ENCODE measurements at regions of chr5 and their contacts with region 1.

Region 1: GRCh38 chr5:141878711-141879425 is 658 bp upstream of the PCDH1 start:
- DNase-seq: peak; percentile 88
- ATAC-seq: peak; percentile 92

Region 2: DNA sequence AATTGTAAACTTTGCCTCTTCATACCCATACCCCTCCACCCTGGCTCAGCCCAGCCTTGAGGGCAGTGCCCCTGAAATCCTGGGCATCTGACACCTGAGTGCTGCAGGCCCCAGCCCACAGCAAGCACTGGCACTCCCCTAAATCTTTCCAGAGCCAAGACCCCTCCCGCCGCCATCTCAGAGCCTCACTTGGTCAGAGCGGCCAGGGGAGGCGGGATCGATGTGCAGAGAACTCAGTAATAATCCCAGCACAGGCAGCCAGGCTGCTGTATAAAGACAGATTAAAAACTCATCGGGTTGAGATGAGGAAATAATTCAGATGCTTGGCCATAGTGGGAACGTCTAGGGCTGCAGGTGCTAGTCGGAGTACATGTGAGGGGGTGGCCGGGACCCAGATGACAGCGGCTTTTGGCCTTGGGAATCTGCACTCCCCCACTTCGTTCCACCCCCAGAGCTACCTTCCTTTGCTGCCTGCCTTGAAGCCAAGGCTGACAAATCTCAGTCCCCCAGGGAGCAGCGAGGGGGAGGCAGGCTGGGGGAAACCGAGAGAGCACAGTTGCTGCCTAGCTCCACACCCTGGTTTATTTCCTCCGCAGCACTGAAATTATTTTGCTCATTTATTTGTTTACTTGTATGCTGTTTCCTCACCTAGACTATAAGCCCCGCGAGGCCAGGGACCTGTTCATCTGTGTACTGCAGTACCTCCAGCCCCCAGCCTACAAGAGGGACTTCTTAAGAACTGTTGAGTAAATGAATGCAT is 177.3 kb before region 1 on chr5:
- intact Hi-C with region 1: loop called (anchors 2 kb)
- DNase-seq: no peak
- ATAC-seq: peak; percentile 11

Region 3: DNA sequence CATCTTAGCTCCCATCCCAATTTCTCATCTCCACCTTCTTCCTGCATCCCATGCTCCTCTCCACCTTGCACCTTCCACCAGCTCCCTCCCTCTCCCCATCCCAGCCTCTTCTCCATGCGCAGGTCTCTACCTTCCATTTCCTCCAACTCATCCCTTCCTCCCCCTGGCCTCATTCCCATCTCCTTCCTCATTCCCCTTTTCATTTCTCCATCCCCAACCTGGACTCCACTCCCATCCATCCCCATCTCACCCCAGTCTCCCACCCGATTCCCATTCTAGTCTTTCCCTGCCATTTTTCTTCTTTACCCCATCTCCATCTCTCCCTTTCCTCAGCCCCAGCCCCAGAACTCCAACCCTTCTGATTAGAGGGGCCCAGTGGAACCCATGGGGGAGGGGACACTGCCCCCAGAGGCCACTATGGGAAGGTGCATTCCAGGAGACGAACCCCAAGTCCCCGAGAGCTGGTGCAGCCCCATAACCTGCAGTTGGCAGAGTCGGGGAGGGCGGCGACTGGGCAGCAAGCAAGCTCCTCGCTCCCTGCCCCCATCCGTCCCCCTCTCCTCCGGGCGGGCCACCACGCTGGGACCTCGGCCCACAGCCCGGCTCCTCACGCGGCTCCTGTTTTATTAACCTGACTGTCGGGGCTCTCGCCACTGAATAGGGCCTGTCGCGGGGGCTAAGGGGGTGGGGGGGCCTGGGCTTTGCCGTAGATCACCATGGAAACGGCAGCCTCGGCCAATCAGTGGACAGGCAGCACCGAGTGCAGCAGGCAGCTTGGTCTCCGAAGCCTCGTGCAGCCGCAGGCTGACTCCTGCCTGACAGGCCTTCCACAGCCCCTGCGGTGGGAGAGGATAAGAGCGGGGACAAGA is 67.3 kb before region 1 on chr5:
- intact Hi-C with region 1: loop called (anchors 5 kb)
- DNase-seq: no peak
- ATAC-seq: no peak

Region 4: DNA sequence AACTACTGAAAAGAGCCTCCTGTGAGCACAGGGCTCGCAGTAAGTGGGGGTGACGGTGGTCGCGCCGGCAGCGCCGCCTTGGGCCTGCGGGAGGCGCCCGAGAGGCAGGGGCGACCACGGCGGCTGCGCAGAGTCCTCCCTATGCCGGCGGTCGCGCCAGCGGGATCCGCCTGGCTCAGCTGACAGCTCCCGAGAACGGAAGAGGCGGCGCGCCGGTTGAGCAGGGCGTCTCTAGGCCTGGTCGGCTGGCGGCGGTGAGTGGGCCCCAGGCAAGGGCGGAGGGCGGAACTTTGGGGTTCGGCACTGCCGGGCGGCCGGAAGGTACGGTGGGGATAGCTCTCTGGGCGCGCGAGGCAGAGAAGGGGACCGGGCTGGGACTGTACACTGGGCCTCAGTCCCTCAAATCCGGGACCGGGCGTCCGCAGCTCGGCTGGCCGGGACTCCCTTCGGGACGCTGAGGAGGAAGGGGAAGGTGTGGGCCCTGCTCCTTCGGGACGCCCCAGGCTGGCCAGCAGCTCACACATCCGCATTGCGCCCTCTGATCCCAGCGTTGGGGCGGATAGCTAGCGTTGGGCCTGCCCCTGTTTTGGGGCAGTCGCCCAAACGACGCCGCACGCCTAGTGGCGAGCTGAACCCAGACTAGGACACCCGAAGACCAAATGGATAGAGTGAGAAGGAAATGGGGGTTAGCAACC is 90.2 kb after region 1 on chr5 and contains the start of gene RNF14:
- intact Hi-C with region 1: loop called (anchors 10 kb)
- DNase-seq: peak; percentile 97
- ATAC-seq: peak; percentile 99
- total RNA-seq, gene RNF14: 104 TPM